ENCODE measurements at regions of chr4 and their contacts with region 1.

Region 1: DNA sequence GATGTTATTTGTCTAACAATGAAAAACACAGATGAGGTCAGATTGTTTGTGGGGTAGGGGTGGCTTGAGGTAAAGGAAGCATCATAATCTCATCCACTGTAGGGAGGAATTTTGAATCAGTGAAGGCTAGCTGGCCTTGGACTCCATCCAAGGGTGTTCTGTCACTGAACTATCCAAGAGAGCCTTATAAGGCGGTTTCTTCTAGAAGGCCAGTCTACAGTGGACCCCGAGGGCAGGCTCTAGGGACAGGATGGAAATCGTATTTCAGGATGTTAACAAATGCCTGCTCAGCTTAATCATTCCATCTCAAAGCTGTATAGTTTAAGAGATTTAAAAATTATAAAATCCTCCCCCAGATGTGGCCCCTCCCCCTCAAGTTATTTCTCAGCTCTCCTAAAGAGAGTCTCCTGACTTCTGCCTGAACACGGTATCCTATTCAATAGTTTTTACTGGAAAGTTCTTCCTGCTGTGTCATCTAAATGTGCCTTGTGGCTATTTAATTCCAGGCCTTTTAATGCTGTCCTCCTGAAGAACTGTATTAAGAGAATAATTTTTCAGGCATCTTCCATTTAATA is 8.0 kb downstream of the IGFBP7 start:
- DNase-seq: peak; percentile 94
- H3K4me3 ChIP-seq: no peak overlapping the region
- H3K27ac ChIP-seq: peak overlapping the region; percentile 75
- H3K4me1 ChIP-seq: peaks cover 45% of the 10 kb centered on the region
- H3K27me3 ChIP-seq: no peaks in the 10 kb centered on the region
- CTCF ChIP-seq: no peak
- POLR2A ChIP-seq: no peak

Region 2: GRCh38 chr4:57043347-57044251 is 58.5 kb before region 1 on chr4:
- CTCF ChIA-PET with region 1: no interaction called
- POLR2A ChIA-PET with region 1: no interaction called
- dilution Hi-C with region 1: no loop called
- intact Hi-C with region 1: loop called (anchors 2 kb)
- DNase-seq: peak; percentile 82
- H3K4me3 ChIP-seq: no peak overlapping the region
- H3K27ac ChIP-seq: no peak overlapping the region
- H3K4me1 ChIP-seq: peaks cover 25% of the 10 kb centered on the region
- H3K27me3 ChIP-seq: no peaks in the 10 kb centered on the region
- CTCF ChIP-seq: no peak
- POLR2A ChIP-seq: no peak

Region 3: DNA sequence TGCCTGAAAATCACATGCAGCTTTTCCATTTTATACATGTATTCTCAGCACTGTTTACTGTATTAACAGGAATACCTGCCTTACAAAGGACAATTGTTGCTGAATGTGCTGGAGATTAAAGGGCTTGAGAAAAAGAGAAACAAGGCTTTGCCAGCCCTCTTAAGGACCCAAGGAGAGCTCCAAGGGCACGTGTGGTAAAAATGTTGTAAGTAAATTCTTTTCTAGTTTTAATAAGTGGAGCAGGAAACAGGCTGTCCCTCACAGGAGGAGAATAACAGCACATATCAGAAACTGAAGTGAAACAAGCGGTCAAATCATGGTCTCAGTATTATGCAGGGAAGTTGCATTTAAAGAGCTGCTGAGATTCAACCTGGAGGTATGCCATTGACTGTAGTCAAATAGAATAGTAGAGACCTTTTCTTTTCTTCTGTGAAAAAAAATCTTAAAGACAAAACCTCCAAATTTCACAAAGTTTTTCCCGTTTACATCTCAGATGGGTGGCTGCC is 10.4 kb before region 1 on chr4:
- CTCF ChIA-PET with region 1: interaction called, 6 read pairs
- POLR2A ChIA-PET with region 1: interaction called, 5 read pairs
- dilution Hi-C with region 1: no loop called
- intact Hi-C with region 1: loop called (anchors 1 kb)
- DNase-seq: no peak
- H3K4me3 ChIP-seq: no peak overlapping the region
- H3K27ac ChIP-seq: peak overlapping the region; percentile 35
- H3K4me1 ChIP-seq: peaks cover 48% of the 10 kb centered on the region
- H3K27me3 ChIP-seq: no peaks in the 10 kb centered on the region
- CTCF ChIP-seq: no peak
- POLR2A ChIP-seq: no peak

Region 4: DNA sequence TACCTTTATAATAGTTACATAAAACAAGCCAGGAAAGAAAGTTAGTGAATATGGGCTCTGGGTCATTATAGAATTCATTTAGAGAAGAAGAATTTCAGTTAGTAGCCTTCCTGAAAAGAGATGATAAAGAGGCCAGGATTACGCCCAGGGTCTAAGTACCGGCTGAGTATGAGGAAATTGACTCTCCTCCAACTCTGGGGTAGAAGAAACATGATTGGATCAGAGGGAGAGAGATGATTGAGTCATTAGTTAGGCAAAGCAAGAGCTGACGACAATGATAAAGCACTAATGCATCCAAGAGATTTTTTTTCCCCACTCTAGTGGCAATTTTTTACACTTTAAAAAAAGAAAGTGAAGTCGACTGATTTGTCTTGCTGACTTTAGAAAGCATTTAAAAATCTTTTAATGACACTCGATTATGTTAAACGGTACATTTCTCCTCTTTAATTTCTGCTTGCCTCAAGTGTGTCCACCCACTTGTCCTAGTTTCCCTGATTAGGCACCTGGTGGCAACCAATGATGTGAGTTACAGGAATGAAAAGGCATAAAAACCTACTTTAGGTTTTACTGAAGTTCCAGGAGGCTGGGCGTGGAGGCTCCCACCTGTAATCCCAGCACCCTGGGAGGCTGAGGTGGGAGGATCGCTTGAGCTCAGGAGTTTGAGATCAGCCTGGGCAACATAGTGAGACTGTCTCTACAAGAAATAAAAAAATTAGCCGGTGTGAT is 45.4 kb after region 1 on chr4:
- CTCF ChIA-PET with region 1: no interaction called
- POLR2A ChIA-PET with region 1: no interaction called
- dilution Hi-C with region 1: no loop called
- intact Hi-C with region 1: no loop called
- DNase-seq: peak; percentile 22
- H3K4me3 ChIP-seq: no peak overlapping the region
- H3K27ac ChIP-seq: no peak overlapping the region
- H3K4me1 ChIP-seq: no peaks in the 10 kb centered on the region
- H3K27me3 ChIP-seq: no peaks in the 10 kb centered on the region
- CTCF ChIP-seq: no peak
- POLR2A ChIP-seq: no peak

Measured in endothelial cell of umbilical vein (primary cell).